ENCODE measurements at regions of chr1 and their contacts with region 1.

Region 1: DNA sequence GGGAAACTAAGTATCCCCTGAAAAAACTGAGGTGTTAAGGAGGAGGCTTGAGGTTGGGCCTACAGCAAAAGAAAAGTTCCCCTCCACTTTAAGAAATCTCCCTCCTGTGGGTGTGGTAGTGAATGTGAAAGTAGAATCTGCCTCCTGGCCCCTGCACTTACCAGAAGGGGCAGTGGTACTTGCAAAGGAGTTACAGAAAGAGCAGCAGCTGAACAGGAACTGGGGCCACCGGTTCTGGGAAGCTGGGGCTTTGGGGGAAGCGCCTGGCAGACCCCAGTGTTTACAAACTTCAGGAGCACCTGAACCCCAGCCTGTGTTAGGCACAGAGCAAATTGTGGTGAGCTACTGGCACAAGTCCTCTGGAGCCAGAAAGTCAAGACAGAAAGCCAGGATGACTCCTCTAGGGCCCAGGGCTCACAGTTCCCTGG is 250.2 kb upstream of the FGGY start:
- DNase-seq: peak; percentile 89
- H3K4me3 Mint-ChIP-seq: peak overlapping the region; percentile 76
- H3K27ac Mint-ChIP-seq: peak overlapping the region; percentile 96
- H3K4me1 Mint-ChIP-seq: peaks cover 60% of the 10 kb centered on the region
- H3K27me3 Mint-ChIP-seq: no peaks in the 10 kb centered on the region

Region 2: DNA sequence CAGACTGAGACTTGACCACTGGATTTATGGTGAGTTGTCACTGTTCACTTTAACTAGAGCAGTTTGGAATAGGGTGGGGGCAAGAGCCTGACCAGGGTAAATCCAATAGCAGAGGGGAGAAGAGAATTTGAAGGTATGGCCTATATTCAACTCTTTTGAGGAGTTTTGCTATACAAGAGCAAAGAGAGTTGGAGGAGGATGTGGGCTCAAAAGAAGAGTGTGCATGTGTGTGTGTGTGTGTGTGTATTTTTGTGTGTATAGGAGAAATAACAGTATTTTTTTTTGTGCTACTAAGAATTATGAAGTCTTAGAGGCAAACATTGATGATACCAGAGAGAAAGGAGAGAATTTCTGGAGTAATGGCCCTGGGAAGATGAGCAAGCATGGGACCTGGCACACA is 98.1 kb before region 1 on chr1:
- intact Hi-C with region 1: loop called (anchors 5 kb)
- DNase-seq: no peak
- H3K4me3 Mint-ChIP-seq: no peak overlapping the region
- H3K27ac Mint-ChIP-seq: no peak overlapping the region
- H3K4me1 Mint-ChIP-seq: peaks cover 30% of the 10 kb centered on the region
- H3K27me3 Mint-ChIP-seq: no peaks in the 10 kb centered on the region

Region 3: DNA sequence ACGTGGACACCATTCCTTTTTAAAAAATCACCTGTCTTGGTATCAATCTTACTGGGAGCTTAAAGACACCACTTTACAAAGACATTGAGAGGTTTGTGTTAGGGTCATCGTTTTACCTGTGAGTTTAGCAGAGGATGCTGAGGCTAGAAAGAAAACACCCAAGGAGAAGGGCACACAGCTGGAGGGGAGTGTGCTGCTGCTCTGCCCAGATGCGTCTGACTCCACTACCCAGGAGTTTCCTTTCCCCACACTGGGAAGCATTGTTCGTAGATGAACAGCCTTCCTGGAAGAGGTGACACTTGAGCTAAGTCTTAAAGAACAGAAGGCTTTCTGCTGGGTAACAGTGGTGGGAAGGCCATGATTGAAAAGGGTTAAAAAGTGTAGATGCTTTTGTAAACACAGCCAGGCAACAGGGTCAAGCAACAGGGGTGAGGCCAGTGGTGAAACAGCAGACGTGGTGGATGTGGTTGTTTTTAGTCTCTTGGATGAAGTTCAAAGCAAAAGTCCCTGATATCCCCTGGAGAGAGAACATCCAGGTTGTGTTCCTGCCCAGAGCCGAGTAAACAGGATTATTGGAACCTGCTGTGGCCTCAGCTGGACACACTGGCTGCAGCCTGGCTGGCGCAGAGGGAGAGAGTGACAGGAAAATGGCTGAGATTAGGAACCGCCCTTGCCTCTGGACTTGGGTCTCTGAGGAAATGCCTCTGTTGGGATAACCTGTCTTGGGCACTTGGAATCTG is 64.3 kb before region 1 on chr1:
- intact Hi-C with region 1: no loop called
- DNase-seq: no peak
- H3K4me3 Mint-ChIP-seq: no peak overlapping the region
- H3K27ac Mint-ChIP-seq: no peak overlapping the region
- H3K4me1 Mint-ChIP-seq: peaks cover 34% of the 10 kb centered on the region
- H3K27me3 Mint-ChIP-seq: no peaks in the 10 kb centered on the region

Region 4: DNA sequence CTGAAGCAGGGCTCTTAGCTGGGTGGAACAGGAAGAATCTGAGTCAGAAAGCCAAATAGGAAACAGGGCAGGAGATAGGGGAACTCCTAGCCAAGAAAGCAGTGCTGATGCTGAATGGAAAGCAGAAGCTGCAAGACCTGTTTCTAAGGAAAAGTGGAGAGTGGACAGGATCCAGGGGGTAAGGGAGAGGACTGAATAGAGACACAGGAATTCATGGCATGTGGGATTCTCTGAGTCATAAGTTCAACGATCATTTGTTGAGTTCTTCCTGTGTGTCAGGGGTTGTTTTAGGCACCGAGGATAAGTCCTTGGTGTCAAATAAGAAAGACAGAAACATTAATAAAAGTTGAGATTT is 96.4 kb after region 1 on chr1:
- intact Hi-C with region 1: loop called (anchors 5 kb)
- DNase-seq: no peak
- H3K4me3 Mint-ChIP-seq: peak overlapping the region; percentile 62
- H3K27ac Mint-ChIP-seq: peak overlapping the region; percentile 87
- H3K4me1 Mint-ChIP-seq: peaks cover 61% of the 10 kb centered on the region
- H3K27me3 Mint-ChIP-seq: no peaks in the 10 kb centered on the region

Measured in activated CD4-positive, alpha-beta T cell treated with anti-CD3 and anti-CD28 coated beads, Interleukin-2, amount 10 ng/mL, durations not matched to agents 24 days and 14 days (primary cell).